Heart left ventricle (tissue), 16 donors: ENCODE measurements at regions of chr10 and their contacts with region 1.

Region 1: DNA sequence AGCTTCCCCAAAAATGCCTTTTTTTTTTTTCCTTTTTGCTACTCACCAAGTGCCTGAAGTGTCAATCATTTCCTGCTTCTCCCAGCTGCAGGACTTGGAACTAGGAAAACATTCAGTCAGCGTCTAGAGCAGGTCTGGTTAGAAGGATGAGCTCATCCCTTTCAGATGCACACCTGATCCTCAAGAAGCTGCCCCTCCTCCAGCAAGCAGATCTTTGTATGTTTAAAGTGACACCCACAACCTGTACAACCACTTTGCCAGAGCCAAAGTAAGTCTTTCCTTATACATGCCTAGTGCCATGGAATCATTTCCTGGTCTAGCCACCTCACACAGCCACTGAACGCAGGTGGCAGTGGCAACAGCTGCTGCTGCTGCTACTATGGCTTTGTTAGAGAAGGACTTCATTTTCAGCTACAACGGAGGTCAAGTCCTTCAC is 10.4 kb upstream of the USP54 start:
- DNase-seq: no peak
- ATAC-seq: no peak
- H3K4me3 ChIP-seq: no peak overlapping the region
- H3K27ac ChIP-seq: no peak overlapping the region
- H3K4me1 ChIP-seq: no peaks in the 10 kb centered on the region
- H3K27me3 ChIP-seq: no peaks in the 10 kb centered on the region
- CTCF ChIP-seq: no peak
- POLR2A ChIP-seq: no peak

Region 2: GRCh38 chr10:73561192-73561591 is 40.3 kb before region 1 on chr10:
- intact Hi-C with region 1: loop called in 1 of 10 experiments (anchors 5 kb)
- DNase-seq: no peak
- ATAC-seq: no peak
- H3K4me3 ChIP-seq: no peak overlapping the region
- H3K27ac ChIP-seq: no peak overlapping the region
- H3K4me1 ChIP-seq: no peaks in the 10 kb centered on the region
- H3K27me3 ChIP-seq: no peaks in the 10 kb centered on the region
- CTCF ChIP-seq: no peak
- POLR2A ChIP-seq: no peak

Region 3: GRCh38 chr10:73827346-73828089 is 226.0 kb after region 1 on chr10:
- intact Hi-C with region 1: no loop called
- DNase-seq: no peak
- ATAC-seq: no peak
- H3K4me3 ChIP-seq: no peak overlapping the region
- H3K27ac ChIP-seq: no peak overlapping the region
- H3K4me1 ChIP-seq: no peaks in the 10 kb centered on the region
- H3K27me3 ChIP-seq: no peaks in the 10 kb centered on the region
- CTCF ChIP-seq: no peak
- POLR2A ChIP-seq: no peak